Activated naive CD8-positive, alpha-beta T cell treated with anti-CD3 and anti-CD28 coated beads, Interleukin-2, amount 10 ng/mL, durations not matched to agents 7 days and 5 days (primary cell): ENCODE measurements at regions of chr20 and their contacts with region 1.

Region 1: GRCh38 chr20:3420211-3420707 is 12.8 kb upstream of the DNAAF9 start:
- DNase-seq: peak; percentile 46
- ATAC-seq: peak; percentile 100
- H3K4me3 Mint-ChIP-seq: peak overlapping the region; percentile 58
- H3K27ac Mint-ChIP-seq: peak overlapping the region; percentile 96
- H3K4me1 Mint-ChIP-seq: peaks cover 18% of the 10 kb centered on the region
- H3K27me3 Mint-ChIP-seq: peaks cover 19% of the 10 kb centered on the region

Region 2: DNA sequence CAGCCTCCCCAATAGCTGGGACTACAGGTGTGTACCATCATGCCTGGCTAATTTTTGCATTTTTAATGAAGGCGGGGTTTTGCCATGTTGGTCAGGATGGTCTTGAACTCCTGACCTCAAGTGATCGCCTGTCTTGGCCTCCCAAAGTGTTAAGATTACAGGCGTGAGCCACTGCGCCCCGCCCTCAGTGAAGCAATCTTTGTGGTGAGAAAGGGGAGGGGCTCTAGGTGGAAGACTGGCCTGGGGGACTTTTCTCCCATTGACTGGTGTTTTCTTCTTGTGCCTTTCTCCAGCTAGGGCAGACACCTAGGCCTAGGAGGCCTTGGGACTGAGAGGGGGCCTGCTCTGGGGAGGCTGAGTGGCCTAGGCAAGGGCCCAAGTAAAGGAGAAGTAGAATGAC is 96.9 kb before region 1 on chr20:
- POLR2A ChIA-PET with region 1: no interaction called
- DNase-seq: no peak
- ATAC-seq: no peak
- H3K4me3 Mint-ChIP-seq: no peak overlapping the region
- H3K27ac Mint-ChIP-seq: no peak overlapping the region
- H3K4me1 Mint-ChIP-seq: peaks cover 9% of the 10 kb centered on the region
- H3K27me3 Mint-ChIP-seq: no peaks in the 10 kb centered on the region

Region 3: GRCh38 chr20:3407771-3408637 is 12.3 kb before region 1 on chr20:
- POLR2A ChIA-PET with region 1: interaction called, 26 read pairs
- DNase-seq: peak; percentile 79
- ATAC-seq: peak; percentile 62
- H3K4me3 Mint-ChIP-seq: peak overlapping the region; percentile 94
- H3K27ac Mint-ChIP-seq: peak overlapping the region; percentile 96
- H3K4me1 Mint-ChIP-seq: peaks cover 19% of the 10 kb centered on the region
- H3K27me3 Mint-ChIP-seq: peaks cover 22% of the 10 kb centered on the region